Psoas muscle (tissue), 8 donors: ENCODE measurements at regions of chr6 and their contacts with region 1.

Region 1: GRCh38 chr6:73580247-73581149 is 59.7 kb upstream of the EEF1A1 start:
- DNase-seq: peak; percentile 86 to 87
- ATAC-seq: peak; percentile 84 to 91 (median 88)
- H3K4me3 ChIP-seq: peak overlapping the region; percentile 20
- H3K27ac ChIP-seq: peak overlapping the region; percentile 84
- H3K4me1 ChIP-seq: peaks cover 21% of the 10 kb centered on the region
- H3K27me3 ChIP-seq: no peaks in the 10 kb centered on the region
- CTCF ChIP-seq: peak; percentile 32

Region 2: GRCh38 chr6:73520688-73521350 is 59.7 kb before region 1 on chr6 and contains the start of gene EEF1A1:
- intact Hi-C with region 1: loop called in 1 of 2 experiments (anchors 1 kb)
- DNase-seq: peak; percentile 98
- ATAC-seq: peak; percentile 76 to 88 (median 82)
- H3K4me3 ChIP-seq: peak within 1 kb of the TSS; percentile 91
- H3K27ac ChIP-seq: peak within 1 kb of the TSS; percentile 90
- H3K4me1 ChIP-seq: peaks cover 12% of the 10 kb centered on the region
- H3K27me3 ChIP-seq: peaks cover 0 to 58% (median 17%) of the 10 kb centered on the region in 3 donors
- CTCF ChIP-seq: no peak
- total RNA-seq, gene EEF1A1: 703 to 2,379 (median 902) TPM